ENCODE measurements at regions of chr1 and their contacts with region 1.

Region 1: DNA sequence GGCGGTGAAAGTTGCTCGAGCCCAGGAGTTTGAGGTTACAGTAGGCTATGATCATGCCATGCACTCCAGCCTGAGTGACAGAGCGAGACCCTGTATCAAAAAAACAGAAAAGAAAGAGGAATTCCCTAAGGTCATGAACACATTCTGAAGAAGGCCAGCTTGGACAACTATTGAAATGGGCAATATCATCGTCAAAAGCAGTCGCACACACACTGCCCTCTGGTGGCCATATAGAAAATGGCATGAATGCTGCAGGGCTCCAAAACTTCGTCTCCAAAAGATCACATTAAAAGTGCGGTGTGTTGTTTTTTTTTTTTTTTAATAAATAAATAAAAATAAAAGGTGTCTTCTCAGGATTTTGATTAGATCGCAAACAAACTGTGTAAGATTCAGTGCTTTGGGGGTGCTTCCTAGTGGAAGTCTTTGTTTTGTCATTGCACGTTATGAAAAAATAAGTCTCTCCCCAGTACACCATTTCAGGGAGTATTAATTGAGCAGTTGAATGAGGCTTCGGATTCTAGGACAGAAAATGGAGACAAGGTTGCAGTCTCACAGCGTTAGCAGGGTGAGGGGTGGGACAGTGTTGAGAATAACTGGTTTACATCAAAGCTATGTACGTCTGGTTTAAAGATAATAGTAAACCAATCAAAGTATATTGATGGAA is 87.5 kb upstream of the FMN2 start:
- DNase-seq: no peak
- H3K4me3 Mint-ChIP-seq: no peak overlapping the region
- H3K27ac Mint-ChIP-seq: no peak overlapping the region
- H3K4me1 Mint-ChIP-seq: no peaks in the 10 kb centered on the region
- H3K27me3 Mint-ChIP-seq: peaks cover 6% of the 10 kb centered on the region

Region 2: GRCh38 chr1:239898062-239898730 is 106.0 kb before region 1 on chr1:
- CTCF ChIA-PET with region 1: no interaction called
- POLR2A ChIA-PET with region 1: no interaction called
- DNase-seq: peak; percentile 74
- H3K4me3 Mint-ChIP-seq: no peak overlapping the region
- H3K27ac Mint-ChIP-seq: no peak overlapping the region
- H3K4me1 Mint-ChIP-seq: peaks cover 6% of the 10 kb centered on the region
- H3K27me3 Mint-ChIP-seq: peaks cover 10% of the 10 kb centered on the region

Region 3: GRCh38 chr1:239914751-239915231 is 89.4 kb before region 1 on chr1:
- CTCF ChIA-PET with region 1: no interaction called
- POLR2A ChIA-PET with region 1: no interaction called
- DNase-seq: no peak
- H3K4me3 Mint-ChIP-seq: no peak overlapping the region
- H3K27ac Mint-ChIP-seq: no peak overlapping the region
- H3K4me1 Mint-ChIP-seq: peaks cover 2% of the 10 kb centered on the region
- H3K27me3 Mint-ChIP-seq: peaks cover 28% of the 10 kb centered on the region

Region 4: DNA sequence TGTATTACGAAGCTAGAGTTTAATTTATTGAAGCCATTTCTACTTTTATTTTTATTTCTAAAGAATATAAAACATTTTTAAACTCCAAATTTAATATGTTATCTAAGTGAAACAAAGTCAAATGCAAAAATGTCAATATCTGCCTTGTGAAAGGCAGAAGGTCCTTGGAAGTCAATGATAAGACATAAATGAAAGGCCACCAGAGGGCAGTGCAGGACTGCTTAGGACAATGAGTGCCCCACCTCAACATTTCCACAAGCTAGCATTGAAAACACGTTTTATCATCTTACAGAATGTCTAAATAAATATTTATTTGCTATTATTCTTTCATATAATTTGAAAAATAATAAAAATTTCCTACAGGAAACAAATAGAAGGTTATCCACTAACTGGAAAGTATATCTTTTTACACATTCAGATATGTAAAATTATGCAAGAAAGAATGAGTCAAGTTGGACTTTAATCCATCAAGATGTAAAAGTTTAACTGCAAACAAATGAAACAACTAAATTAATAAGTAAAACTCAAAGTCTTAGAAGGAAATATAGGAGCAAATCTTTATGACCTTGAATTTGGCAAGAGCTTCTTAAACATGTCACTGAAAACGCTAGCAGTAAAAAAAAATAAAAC is 52.6 kb before region 1 on chr1:
- CTCF ChIA-PET with region 1: interaction called, 10 read pairs
- POLR2A ChIA-PET with region 1: no interaction called
- DNase-seq: peak; percentile 53
- H3K4me3 Mint-ChIP-seq: no peak overlapping the region
- H3K27ac Mint-ChIP-seq: no peak overlapping the region
- H3K4me1 Mint-ChIP-seq: no peaks in the 10 kb centered on the region
- H3K27me3 Mint-ChIP-seq: no peaks in the 10 kb centered on the region

Region 5: DNA sequence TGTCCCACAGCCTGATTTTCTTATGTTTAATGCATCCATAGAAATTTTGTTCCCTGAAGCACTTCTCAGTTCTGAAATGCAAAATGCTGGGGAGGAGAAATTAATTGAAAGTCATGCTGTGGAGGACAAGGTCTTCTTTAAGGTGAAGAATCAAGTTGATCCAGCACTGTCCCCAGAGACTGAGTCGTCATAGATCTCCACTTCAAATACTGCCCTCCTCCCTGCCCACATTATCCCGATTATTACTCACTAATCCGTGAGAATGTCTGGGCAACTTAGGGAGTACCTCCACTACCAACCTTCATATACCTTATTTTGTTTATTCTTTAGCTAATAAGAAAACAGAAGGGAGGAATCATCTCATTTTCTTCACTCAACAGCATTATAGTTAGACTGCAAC is 17.5 kb after region 1 on chr1:
- CTCF ChIA-PET with region 1: no interaction called
- POLR2A ChIA-PET with region 1: no interaction called
- DNase-seq: no peak
- H3K4me3 Mint-ChIP-seq: no peak overlapping the region
- H3K27ac Mint-ChIP-seq: no peak overlapping the region
- H3K4me1 Mint-ChIP-seq: no peaks in the 10 kb centered on the region
- H3K27me3 Mint-ChIP-seq: no peaks in the 10 kb centered on the region

Region 6: DNA sequence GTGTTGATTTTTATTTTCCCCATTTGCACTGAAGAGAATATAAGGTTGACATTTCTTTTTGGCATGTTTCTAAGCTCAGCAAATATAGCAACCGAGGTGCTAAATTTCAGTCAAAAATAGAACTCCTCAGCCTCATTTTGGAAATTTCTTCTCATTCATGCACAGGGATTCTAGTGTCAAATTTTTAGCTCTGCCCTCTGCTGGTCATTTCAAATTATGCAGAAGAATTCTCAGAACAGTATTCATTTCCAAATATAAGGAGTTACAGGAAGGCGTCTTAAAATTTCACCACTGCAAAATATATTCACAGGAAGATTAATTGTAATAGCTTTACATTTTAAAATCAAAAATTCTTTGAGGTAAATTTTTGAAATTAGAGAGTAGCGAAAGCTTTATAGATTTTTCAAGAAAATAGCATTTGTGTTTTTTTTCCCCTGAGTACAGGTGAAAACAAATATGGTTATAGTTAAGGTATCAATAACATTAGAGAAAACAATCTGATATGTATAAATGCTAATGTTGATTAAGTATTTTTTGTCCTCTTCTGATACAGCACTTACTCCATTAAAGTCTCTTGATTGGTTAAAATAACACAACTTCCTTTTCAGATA is 145.4 kb after region 1 on chr1:
- CTCF ChIA-PET with region 1: no interaction called
- POLR2A ChIA-PET with region 1: no interaction called
- DNase-seq: no peak
- H3K4me3 Mint-ChIP-seq: no peak overlapping the region
- H3K27ac Mint-ChIP-seq: no peak overlapping the region
- H3K4me1 Mint-ChIP-seq: no peaks in the 10 kb centered on the region
- H3K27me3 Mint-ChIP-seq: peaks cover 2% of the 10 kb centered on the region

Measured in activated CD4-positive, alpha-beta memory T cell treated with anti-CD3 and anti-CD28 coated beads, Interleukin-2, amount 10 ng/mL, durations not matched to agents 7 days and 5 days (primary cell).